Mammary epithelial cell (primary cell): ENCODE measurements at regions of chr19 and their contacts with region 1.

Region 1: GRCh38 chr19:28234637-28235036 is 978.3 kb downstream of the UQCRFS1 start:
- DNase-seq: no peak
- H3K4me3 ChIP-seq: no peak overlapping the region
- H3K27ac ChIP-seq: no peak overlapping the region
- H3K4me1 ChIP-seq: no peaks in the 10 kb centered on the region
- H3K27me3 ChIP-seq: no peaks in the 10 kb centered on the region
- CTCF ChIP-seq: no peak

Region 2: GRCh38 chr19:28170066-28170465 is 64.6 kb before region 1 on chr19:
- CTCF ChIA-PET with region 1: no interaction called
- dilution Hi-C with region 1: no loop called
- in situ Hi-C with region 1: no loop called
- intact Hi-C with region 1: no loop called
- DNase-seq: no peak
- H3K4me3 ChIP-seq: no peak overlapping the region
- H3K27ac ChIP-seq: no peak overlapping the region
- H3K4me1 ChIP-seq: no peaks in the 10 kb centered on the region
- H3K27me3 ChIP-seq: no peaks in the 10 kb centered on the region
- CTCF ChIP-seq: no peak

Region 3: GRCh38 chr19:28299649-28300048 is 65.0 kb after region 1 on chr19:
- CTCF ChIA-PET with region 1: no interaction called
- dilution Hi-C with region 1: loop called (anchors 5 kb)
- in situ Hi-C with region 1: no loop called
- intact Hi-C with region 1: no loop called
- DNase-seq: no peak
- H3K4me3 ChIP-seq: no peak overlapping the region
- H3K27ac ChIP-seq: no peak overlapping the region
- H3K4me1 ChIP-seq: peaks cover 21% of the 10 kb centered on the region
- H3K27me3 ChIP-seq: no peaks in the 10 kb centered on the region
- CTCF ChIP-seq: no peak